Cardiac septum (tissue), 1 donor: ENCODE measurements at regions of chr1 and their contacts with region 1.

Region 1: DNA sequence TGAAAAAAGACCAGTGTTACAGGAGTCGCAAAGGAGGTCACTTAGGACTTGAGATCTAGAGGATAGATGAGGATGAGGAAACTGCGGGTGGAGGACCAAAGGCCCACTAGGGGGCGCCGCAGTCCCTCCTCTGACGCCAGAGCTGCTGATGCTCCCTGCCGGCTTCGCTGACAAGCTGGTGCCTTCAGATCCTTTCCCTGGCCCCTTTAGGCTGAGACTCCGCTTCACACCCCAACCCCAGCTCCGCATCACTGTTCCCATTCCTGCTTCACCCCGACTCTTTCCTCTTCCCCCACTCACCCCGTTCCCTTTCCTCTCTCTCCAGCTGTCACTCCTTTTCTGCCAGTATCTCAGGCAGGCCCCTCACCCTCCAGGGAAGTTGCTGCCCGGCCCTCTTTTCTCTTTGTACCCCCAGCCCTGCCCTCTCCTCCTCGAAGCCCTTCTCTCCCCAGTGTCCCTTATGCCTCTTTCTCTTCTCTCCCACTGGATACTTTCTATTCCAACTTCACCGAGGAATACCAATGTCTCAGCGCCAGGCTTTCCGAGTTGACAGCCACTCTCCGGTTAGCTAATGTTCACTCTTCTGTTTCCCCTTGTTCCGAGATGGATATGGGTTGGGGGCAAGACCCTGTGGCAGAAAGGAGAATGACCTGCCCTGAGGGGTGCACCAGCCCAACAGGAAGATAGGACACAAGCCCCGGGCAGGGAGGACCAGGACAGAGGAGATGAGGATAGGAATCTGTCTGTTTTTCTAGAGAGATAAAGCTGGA is 4.5 kb downstream of the KCNJ9 start:
- DNase-seq: peak; percentile 85

Region 2: DNA sequence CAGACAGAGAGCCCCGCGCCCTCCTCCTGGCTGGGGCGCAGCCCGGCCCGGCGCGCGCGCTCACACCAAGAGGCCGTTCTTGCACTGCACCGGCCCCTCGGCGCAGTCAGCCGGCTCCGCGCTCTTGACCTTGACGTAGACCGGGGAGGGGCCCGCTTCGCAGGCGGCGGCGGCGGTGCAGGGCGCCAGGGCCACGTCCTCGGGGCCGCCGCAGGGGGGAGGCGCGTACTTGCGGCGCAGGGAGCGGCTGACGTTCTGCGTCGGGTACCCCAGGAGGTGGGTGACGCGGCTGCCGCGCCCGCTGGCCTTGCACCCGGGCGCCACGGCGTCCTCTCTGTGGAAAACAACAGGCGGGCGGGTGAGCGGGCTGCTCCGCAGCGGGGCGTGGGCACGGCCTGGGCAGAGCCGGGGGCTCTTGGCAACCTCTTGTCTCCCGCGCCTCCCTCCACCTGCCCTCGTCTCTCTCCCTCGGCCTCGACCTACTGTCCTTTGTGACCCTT is 231.1 kb before region 1 on chr1:
- intact Hi-C with region 1: no loop called
- DNase-seq: peak; percentile 92

Region 3: GRCh38 chr1:160046494-160047110 is 39.3 kb before region 1 on chr1:
- intact Hi-C with region 1: loop called (anchors 5 kb)
- DNase-seq: peak; percentile 77

Region 4: GRCh38 chr1:160143695-160144094 is 57.8 kb after region 1 on chr1:
- intact Hi-C with region 1: no loop called
- DNase-seq: no peak

Region 5: DNA sequence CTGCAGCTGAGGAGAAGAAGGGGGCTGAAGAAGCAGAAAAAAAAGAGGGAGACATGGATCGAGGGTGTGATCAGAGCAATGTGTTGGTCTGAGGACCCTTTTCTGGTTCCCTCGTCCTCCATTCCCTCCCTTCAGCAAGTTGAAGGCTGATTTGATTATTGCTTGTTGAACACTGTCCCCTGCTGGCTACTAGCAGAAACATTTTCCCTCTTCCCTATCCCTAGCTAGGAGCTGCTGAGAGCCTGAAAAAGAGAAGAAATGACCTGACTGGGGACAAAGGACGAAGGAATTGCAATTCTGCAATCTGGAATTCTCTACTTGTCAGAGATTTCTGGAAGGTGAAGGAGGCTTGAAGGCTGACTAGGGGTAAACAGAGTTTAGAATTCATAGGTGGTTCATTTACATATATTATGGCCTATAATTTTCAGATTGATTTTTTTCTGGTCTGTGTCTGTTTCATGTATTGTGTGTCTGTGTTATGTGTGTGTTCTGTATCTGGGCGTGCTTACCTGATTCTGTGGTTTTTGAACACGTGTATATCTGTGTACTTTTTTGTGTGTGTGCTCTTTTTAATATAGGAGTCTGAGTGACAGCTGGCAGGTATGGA is 290.8 kb after region 1 on chr1:
- intact Hi-C with region 1: loop called (anchors 5 kb)
- DNase-seq: no peak